Thyroid gland (tissue), 4 donors: ENCODE measurements at regions of chr19 and their contacts with region 1.

Region 1: DNA sequence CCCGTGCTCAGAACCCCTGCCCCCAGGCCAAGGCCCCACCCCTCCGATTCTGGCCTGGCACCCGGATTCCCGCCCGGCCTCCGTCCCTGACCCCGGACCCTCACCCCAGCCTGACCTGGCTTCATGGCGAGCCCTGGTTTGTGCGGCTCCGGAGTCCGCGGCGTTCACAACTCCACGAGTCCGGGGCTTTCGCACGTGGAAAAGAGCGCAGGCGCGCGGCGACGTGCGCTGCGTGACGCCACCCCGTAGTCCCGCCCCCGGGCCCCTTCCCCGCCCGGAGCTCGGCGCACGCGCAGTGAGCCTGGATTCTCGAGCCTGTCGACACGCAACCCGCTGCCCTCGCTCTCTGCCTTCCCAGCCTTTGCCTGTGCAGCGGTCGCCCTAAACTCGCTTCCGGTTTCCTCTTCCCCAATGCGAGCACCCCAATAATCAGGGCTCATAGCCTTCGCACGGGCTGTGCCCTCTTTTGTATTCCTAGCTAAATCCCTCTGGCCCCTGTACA is at the start of gene FBL:
- DNase-seq: peak; percentile 95 to 96
- H3K4me3 ChIP-seq: peak within 1 kb of the TSS; percentile 53 to 90 (median 86)
- H3K27ac ChIP-seq: peak within 1 kb of the TSS; percentile 77 to 86 (median 80)
- H3K4me1 ChIP-seq: peaks cover 18 to 38% of the 10 kb centered on the region in 2 donors
- H3K27me3 ChIP-seq: no peaks in the 10 kb centered on the region
- CTCF ChIP-seq: no peak
- POLR2A ChIP-seq: peak; percentile 2 to 78
- total RNA-seq, gene FBL: 80.9 to 118 (median 91.1) TPM

Region 2: DNA sequence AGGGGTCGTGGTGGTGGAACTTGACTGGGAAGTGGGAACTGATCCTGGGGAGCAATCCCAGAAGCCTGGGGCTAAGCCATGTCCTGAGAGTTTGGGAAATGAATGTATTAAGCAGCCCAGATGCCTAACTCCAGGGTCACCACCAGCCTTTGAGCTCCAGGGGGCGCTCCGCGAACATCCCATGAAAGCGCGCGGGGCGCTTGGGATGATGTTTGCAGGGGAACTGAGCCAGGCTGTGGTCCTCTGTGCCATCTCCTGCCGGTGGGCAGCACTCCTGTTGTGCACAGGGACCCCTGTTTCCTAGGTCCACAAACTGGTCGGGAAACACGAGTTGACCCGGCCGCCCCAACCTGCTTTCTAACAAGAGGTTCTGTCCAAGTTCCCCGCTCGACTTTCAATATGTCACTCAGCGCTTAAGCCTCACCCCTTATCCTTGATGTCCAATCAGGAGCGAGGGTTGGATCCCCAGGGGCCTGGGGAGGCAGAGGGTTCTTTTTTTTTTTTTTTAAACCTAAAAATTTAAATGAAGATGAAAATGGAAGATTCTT is 53.2 kb before region 1 on chr19:
- intact Hi-C with region 1: loop called (anchors 5 kb)
- DNase-seq: peak; percentile 75 to 84
- H3K4me3 ChIP-seq: peak overlapping the region in 1 of 3 donors; percentile 25
- H3K27ac ChIP-seq: no peak overlapping the region
- H3K4me1 ChIP-seq: no peaks in the 10 kb centered on the region
- H3K27me3 ChIP-seq: no peaks in the 10 kb centered on the region
- CTCF ChIP-seq: peak; percentile 64 to 93 (median 88)
- POLR2A ChIP-seq: no peak